ENCODE measurements at regions of chr11 and their contacts with region 1.

Region 1: DNA sequence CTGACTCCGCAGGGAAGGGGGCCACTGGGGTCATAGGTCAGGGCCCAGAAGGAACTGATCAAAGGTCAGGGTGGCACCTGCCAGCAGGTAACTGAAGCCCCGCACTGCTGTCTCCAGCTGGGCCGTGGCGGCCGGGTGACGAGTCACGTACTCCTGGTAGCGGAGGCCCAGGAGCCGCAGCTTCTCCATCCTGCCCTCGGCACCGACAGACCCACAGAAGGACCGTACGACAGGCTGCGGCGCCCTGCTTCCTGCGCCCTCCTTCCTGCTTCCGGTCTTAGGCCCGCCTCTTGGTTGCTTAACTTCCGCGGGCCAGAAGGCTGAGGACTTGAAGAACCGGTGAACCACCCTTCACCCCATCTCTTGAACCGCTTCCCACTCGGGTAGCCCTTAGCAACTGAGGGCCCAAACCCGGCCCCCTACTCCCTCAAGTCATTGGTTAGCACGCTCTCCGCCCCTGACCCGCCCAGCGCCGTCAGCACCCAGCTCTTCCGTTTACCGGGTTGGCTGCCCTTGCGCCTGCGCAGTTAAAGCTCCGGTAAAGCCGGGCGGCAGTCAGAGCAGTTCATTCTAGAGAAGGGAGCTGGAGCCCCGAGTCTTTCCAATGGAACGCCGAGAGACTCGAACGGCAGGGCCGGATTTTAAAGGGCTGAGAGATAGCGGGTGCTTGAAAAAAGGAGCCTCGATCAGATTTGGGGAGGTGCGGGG is at the start of gene PEX16:
- DNase-seq: peak; percentile 97 to 99 (median 98)
- ATAC-seq: peak; percentile 91 to 95 (median 94)
- H3K4me3 ChIP-seq: peak within 1 kb of the TSS; percentile 75 to 100 (median 94)
- H3K27ac ChIP-seq: peak within 1 kb of the TSS; percentile 77 to 97 (median 90)
- H3K4me1 ChIP-seq: peaks cover 3 to 57% (median 31%) of the 10 kb centered on the region in 12 donors
- H3K27me3 ChIP-seq: peaks cover 7 to 17% (median 10%) of the 10 kb centered on the region in 9 donors
- CTCF ChIP-seq: no peak
- POLR2A ChIP-seq: peak in 1 of 2 donors; percentile 87
- total RNA-seq, gene PEX16: 10.4 to 20.0 (median 14.6) TPM

Region 2: GRCh38 chr11:45698777-45699497 is 218.8 kb before region 1 on chr11:
- intact Hi-C with region 1: no loop called
- DNase-seq: no peak
- ATAC-seq: no peak
- H3K4me3 ChIP-seq: no peak overlapping the region
- H3K27ac ChIP-seq: no peak overlapping the region
- H3K4me1 ChIP-seq: no peaks in the 10 kb centered on the region
- H3K27me3 ChIP-seq: no peaks in the 10 kb centered on the region
- CTCF ChIP-seq: no peak
- POLR2A ChIP-seq: no peak

Region 3: DNA sequence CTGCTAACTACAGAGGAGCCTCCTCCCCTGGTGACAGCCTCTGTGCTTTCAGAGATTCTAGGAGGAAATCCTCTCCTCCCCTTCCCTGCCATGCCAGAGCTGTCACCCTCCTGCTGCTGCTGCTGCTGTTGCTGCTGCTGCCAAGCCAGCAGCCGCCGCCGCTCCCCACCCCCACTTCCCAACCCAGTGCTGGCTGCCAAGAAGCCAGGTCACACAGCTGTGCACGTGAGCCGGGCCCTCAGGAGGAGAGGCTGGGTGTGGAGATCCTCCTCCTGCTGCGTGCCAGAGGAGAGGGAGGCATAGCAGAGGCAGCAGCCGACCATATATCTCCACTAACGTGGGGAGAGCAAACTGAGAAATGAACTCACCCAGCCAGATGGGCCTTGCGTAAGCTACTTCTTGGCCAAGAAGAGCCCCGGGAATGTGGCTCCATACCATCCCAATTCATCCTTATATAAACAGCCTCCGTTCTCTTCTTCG is 58.1 kb before region 1 on chr11:
- intact Hi-C with region 1: loop called in 2 of 10 experiments (anchors 10 kb)
- DNase-seq: peak; percentile 94 to 96 (median 95)
- ATAC-seq: peak; percentile 80 to 87 (median 84)
- H3K4me3 ChIP-seq: no peak overlapping the region
- H3K27ac ChIP-seq: peak overlapping the region; percentile 58 to 99 (median 90)
- H3K4me1 ChIP-seq: peaks cover 23 to 75% (median 62%) of the 10 kb centered on the region in 12 donors
- H3K27me3 ChIP-seq: no peaks in the 10 kb centered on the region
- CTCF ChIP-seq: no peak
- POLR2A ChIP-seq: peak in 1 of 2 donors; percentile 53

Region 4: GRCh38 chr11:45885274-45885920 is 32.4 kb before region 1 on chr11 and contains the start of gene MAPK8IP1:
- intact Hi-C with region 1: no loop called
- DNase-seq: peak in 4 of 5 donors; percentile 55 to 65 (median 57)
- ATAC-seq: peak; percentile 53 to 80 (median 66)
- H3K4me3 ChIP-seq: peak within 1 kb of the TSS in 11 of 12 donors; percentile 28 to 66 (median 51)
- H3K27ac ChIP-seq: no peak within 1 kb of the TSS
- H3K4me1 ChIP-seq: peaks cover 0 to 24% (median 8%) of the 10 kb centered on the region in 12 donors
- H3K27me3 ChIP-seq: peaks cover 0 to 3% (median 0%) of the 10 kb centered on the region in 9 donors
- CTCF ChIP-seq: no peak
- POLR2A ChIP-seq: no peak
- total RNA-seq, gene MAPK8IP1: 5.0 to 8.0 (median 7.6) TPM

Measured in heart left ventricle (tissue), 16 donors.